Testis (tissue), 5 donors: ENCODE measurements at regions of chr19 and their contacts with region 1.

Region 1: GRCh38 chr19:56350416-56351045 is 35.9 kb upstream of the ZSCAN5A start:
- DNase-seq: peak; percentile 50
- H3K4me3 ChIP-seq: no peak overlapping the region
- H3K27ac ChIP-seq: no peak overlapping the region
- H3K4me1 ChIP-seq: no peaks in the 10 kb centered on the region
- H3K27me3 ChIP-seq: no peaks in the 10 kb centered on the region
- CTCF ChIP-seq: peak; percentile 62 to 78 (median 77)
- POLR2A ChIP-seq: no peak

Region 2: GRCh38 chr19:56252699-56253422 is 97.7 kb before region 1 on chr19:
- intact Hi-C with region 1: loop called (anchors 10 kb)
- DNase-seq: peak; percentile 94
- H3K4me3 ChIP-seq: no peak overlapping the region
- H3K27ac ChIP-seq: no peak overlapping the region
- H3K4me1 ChIP-seq: no peaks in the 10 kb centered on the region
- H3K27me3 ChIP-seq: no peaks in the 10 kb centered on the region
- CTCF ChIP-seq: peak; percentile 68 to 87 (median 79)
- POLR2A ChIP-seq: no peak